GM23248 (cell line): ENCODE measurements at regions of chr1 and their contacts with region 1.

Region 1: GRCh38 chr1:115807723-115808122 is 33.2 kb downstream of the NHLH2 start:
- DNase-seq: peak; percentile 83
- H3K4me3 ChIP-seq: no peak overlapping the region
- H3K27ac ChIP-seq: no peak overlapping the region
- H3K4me1 ChIP-seq: no peaks in the 10 kb centered on the region
- H3K27me3 ChIP-seq: no peaks in the 10 kb centered on the region

Region 2: DNA sequence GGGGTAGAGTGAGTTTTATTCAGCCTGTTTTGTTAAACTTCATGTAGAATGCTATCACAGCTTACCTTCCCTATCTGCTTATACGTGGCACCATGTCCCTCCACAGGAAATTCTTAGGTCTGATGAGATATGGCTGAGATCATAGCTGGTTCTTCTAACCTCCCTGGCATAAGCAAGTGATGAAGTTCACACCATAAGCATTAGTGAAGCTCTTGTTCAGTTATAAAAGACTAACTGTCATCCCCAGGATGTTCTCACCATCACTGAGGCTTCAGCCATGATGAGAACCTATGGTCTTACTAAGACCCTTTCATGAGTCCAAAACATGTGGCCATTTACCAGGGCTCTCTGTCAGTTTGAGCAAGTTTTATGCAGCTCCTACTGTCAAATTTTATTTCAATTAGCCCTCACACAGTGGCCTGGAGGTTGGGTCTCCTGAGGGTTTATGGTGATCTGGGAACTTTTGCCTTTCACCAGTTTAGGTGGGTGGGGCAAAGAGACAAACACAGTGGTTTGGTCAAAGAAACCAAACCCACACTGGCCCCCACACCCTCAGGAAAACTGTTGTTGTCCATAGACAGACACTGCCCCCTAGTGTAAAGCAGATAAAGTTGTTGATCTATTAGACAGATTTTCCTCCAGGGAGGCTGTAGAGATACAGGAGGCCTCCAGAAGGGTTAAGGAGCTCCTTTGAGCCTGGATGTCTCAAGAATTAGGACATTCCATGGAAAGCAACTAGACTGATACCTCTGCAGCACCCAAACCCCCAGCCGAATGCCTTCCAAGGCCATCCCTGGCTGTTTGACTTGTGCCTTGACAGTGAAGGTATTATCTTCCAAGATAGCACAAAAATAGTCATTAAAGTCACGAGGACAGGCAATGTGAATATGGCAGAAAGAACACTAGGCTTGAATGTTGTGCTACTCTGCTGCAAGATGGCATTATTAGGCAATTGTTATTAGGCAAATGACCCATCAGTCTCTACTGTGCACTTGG is 173.6 kb after region 1 on chr1:
- in situ Hi-C with region 1: loop called (anchors 10 kb)
- DNase-seq: peak; percentile 80
- H3K4me3 ChIP-seq: no peak overlapping the region
- H3K27ac ChIP-seq: 0 out of 2 replicates have a peak overlapping the region, but pooled peaks have one; percentile 10
- H3K4me1 ChIP-seq: peaks cover 22% of the 10 kb centered on the region
- H3K27me3 ChIP-seq: no peaks in the 10 kb centered on the region